Cardiac septum (tissue), 1 donor: ENCODE measurements at regions of chr17 and their contacts with region 1.

Region 1: GRCh38 chr17:81142301-81143199 is 22.8 kb upstream of the PVALEF start:
- DNase-seq: peak; percentile 87

Region 2: GRCh38 chr17:80637048-80637781 is 505.3 kb before region 1 on chr17:
- intact Hi-C with region 1: no loop called
- DNase-seq: no peak

Region 3: GRCh38 chr17:81200695-81201580 is 58.4 kb after region 1 on chr17:
- intact Hi-C with region 1: loop called (anchors 5 kb)
- DNase-seq: no peak

Region 4: DNA sequence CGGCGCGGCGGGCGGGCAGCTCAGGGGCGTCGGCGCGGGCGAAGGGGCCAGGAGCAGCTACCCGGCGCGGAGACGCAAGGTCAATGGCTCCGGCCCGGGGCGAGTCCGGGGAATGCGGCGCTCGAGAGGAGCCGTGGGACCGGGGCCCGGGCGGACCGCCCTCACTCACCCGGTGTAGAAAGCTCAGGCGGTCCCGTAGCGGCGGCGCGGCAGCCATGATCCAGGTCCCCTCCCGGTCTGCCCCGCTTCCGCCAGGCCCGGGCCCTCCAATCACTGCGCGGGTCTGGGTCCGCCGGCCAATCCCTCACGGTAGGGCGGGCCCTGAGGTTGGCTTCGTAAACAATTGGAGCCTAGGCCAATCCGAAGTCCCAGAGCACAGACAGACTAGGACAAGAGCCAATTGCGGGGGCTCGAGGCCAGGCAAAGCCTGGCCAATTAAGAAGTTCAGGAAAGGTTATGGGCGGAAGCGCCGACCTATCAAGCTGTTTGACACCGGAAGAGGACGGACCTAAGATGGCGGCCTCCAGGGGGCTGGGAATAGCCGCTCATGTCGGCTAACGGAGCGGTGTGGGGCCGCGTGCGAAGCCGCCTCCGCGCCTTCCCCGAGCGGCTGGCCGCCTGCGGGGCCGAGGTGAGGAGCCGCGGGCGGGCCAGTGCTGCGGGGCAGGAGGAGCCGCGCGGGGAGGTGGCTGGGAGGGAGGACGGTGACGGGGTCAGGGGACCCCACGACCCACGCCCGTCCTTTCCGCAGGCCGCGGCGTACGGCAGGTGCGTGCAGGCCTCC is 96.5 kb after region 1 on chr17 and contains the starts of genes NDUFAF8 and TEPSIN:
- intact Hi-C with region 1: loop called (anchors 2 kb)
- DNase-seq: peak; percentile 98
- total RNA-seq, gene NDUFAF8: 61.0 TPM
- total RNA-seq, gene TEPSIN: 12.6 TPM